ENCODE measurements at regions of chr7 and their contacts with region 1.

Region 1: DNA sequence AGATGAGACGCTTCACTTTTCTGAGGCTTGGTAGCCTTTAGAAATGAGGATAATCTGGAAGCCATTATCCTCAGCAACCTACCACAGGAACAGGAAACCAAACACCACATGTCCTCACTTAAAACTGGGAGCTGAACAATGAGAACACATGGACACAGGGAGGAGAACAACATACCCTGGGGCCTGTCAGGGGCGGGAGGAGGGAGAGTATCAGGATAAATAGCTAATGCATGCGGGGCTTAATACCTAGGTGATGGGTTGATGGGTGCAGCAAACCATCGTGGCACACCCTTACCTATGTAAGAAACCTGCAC is 48.9 kb downstream of the LRGUK start:
- DNase-seq: no peak

Region 2: DNA sequence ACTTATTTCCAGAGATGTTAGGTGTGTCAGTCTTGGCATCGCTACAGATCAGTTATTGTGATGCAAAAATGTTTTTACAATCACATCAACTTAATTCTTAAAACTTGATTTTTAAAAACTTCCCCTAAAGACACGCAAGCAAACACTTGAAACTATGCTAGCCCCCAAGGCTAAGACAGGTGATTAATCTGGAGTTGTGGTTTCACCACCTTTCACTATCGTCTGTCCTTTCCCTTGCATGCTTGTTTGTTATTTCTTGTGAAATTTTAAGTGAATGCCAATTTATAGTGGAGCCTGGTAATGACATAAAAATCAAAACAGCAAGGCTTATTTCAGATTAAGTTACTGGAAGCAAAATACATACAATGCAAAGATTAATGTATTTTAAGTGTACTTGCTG is 70.4 kb after region 1 on chr7:
- intact Hi-C with region 1: loop called in 1 of 2 experiments (anchors 2 kb)
- DNase-seq: no peak

Measured in posterior vena cava (tissue), 2 donors.